OCI-LY7 (cell line): ENCODE measurements at regions of chr21 and their contacts with region 1.

Region 1: GRCh38 chr21:33266050-33266788 is at the start of gene IL10RB:
- DNase-seq: peak; percentile 85
- H3K4me3 ChIP-seq: peak within 1 kb of the TSS; percentile 78
- H3K27ac ChIP-seq: peak within 1 kb of the TSS; percentile 70
- H3K4me1 ChIP-seq: peaks cover 60% of the 10 kb centered on the region
- CTCF ChIP-seq: no peak
- total RNA-seq, gene IL10RB: 44.3 and 48.0 TPM in 2 replicates

Region 2: GRCh38 chr21:33089398-33090119 is 176.7 kb before region 1 on chr21:
- CTCF ChIA-PET with region 1: no interaction called
- POLR2A ChIA-PET with region 1: no interaction called
- intact Hi-C with region 1: no loop called
- DNase-seq: no peak
- H3K4me3 ChIP-seq: no peak overlapping the region
- H3K27ac ChIP-seq: no peak overlapping the region
- H3K4me1 ChIP-seq: no peaks in the 10 kb centered on the region
- CTCF ChIP-seq: no peak

Region 3: GRCh38 chr21:33205476-33205875 is 60.7 kb before region 1 on chr21:
- CTCF ChIA-PET with region 1: interaction called, 4 read pairs
- POLR2A ChIA-PET with region 1: interaction called, 6 read pairs
- intact Hi-C with region 1: loop called (anchors 2 kb)
- DNase-seq: peak; percentile 74
- H3K4me3 ChIP-seq: peak overlapping the region; percentile 56
- H3K27ac ChIP-seq: peak overlapping the region; percentile 88
- H3K4me1 ChIP-seq: peaks cover 68% of the 10 kb centered on the region
- CTCF ChIP-seq: peak; percentile 61

Region 4: DNA sequence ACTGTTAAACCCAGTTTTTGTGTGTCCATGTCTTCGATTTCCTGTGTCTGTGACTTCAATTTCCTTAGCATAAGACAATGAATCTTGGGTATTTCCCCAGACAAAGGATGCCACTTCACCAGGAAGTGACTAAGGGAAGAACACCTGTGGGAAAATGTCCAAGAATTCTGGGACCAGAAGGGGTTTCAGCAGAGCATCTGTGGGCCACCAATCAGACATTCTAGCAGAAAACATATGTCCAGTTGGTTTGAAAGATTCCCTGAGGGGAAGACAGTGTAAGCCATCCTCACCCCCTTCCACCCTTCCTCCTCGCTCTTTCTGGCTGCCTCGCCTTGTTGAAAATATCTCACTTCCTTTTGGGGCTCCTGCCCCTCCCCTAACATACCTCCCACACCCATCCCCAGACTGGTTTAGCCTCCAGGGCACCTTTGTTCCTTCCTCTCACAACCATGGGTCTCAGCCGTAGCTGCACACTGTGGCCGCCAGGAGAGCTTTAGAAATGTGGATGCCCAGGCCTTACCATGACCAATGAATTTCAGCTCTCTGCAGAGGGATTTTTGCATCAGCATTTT is 33.0 kb after region 1 on chr21:
- CTCF ChIA-PET with region 1: no interaction called
- POLR2A ChIA-PET with region 1: interaction called, 12 read pairs
- intact Hi-C with region 1: loop called (anchors 1 kb)
- DNase-seq: peak; percentile 89
- H3K4me3 ChIP-seq: peak overlapping the region; percentile 25
- H3K27ac ChIP-seq: peak overlapping the region; percentile 95
- H3K4me1 ChIP-seq: peaks cover 98% of the 10 kb centered on the region
- CTCF ChIP-seq: peak; percentile 67

Region 5: DNA sequence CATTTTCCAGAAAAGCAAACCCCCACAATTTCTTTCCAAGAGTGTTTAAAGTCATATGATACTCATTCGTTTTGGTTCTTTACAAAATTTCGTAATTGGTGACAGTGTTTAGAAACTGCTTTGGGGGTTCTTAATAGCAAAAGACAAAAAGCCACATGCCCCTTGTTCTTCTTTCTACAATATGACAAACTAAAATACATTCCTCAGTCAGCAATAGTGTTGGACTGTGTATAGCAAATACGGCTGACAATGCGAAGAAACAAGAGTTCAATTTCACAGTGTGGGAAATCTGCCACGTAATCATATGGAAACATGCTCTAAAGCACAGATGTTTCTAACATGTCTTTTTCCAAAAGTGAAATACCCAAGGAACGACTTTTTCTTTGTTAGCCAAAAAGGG is 50.9 kb after region 1 on chr21:
- CTCF ChIA-PET with region 1: interaction called, 11 read pairs
- POLR2A ChIA-PET with region 1: interaction called, 5 read pairs
- intact Hi-C with region 1: no loop called
- DNase-seq: no peak
- H3K4me3 ChIP-seq: no peak overlapping the region
- H3K27ac ChIP-seq: no peak overlapping the region
- H3K4me1 ChIP-seq: peaks cover 39% of the 10 kb centered on the region
- CTCF ChIP-seq: no peak

Region 6: DNA sequence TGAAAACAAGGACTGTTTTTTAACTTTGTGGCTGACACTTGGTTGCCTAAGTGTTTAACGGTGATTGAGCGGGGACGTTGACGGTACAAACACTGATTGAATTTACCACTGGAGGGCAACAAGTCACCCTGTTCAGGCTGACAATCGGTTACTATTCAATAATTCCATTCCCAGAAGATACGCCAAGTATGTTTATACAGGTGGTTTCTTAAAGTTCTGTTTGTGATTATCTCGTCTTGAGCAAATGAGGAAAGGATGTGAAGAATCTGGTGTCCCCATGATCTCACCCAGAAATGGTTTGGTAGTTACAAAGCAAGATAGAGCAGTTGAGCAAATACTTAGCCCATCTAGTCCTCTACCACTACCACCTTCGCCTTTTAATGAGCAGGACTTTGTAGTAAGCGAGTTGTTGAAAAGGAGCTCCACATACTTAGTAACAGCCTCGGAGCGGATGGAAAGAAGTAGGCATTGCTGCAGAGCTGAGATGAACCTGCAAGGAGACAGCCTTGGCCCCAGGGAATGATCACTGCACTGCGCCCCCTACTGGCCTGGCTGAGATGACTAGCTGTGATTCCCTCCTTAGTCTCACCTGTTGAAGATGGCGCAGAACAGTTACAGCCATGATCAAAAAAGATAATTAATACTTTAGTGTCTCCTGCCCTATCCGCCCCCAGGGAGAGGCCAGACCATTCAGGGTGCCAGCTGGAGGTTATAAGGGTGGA is 94.8 kb after region 1 on chr21:
- CTCF ChIA-PET with region 1: no interaction called
- POLR2A ChIA-PET with region 1: no interaction called
- intact Hi-C with region 1: loop called (anchors 5 kb)
- DNase-seq: peak; percentile 85
- H3K4me3 ChIP-seq: peak overlapping the region; percentile 38
- H3K27ac ChIP-seq: peak overlapping the region; percentile 73
- H3K4me1 ChIP-seq: peaks cover 38% of the 10 kb centered on the region
- CTCF ChIP-seq: peak; percentile 94

Region 7: DNA sequence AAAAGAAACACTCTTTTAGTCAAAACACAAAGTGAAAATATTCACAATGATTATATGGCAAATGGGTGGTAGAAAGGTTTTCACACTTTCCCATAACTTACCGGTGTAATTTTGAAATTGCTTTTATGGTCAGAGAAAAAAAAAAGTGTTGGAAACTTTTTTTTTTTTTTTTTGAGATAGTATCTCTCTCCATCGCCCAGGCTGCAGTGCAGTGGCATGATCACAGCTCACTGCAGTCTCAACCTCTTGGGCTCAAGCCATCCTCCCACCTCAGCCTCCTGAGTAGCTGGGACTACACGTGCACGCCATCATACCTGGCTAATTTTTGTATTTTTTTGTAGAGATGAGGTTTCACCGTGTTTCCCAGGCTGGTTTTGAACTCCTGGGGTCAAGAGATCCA is 140.3 kb after region 1 on chr21:
- CTCF ChIA-PET with region 1: no interaction called
- POLR2A ChIA-PET with region 1: no interaction called
- intact Hi-C with region 1: no loop called
- DNase-seq: no peak
- H3K4me3 ChIP-seq: no peak overlapping the region
- H3K27ac ChIP-seq: no peak overlapping the region
- H3K4me1 ChIP-seq: peaks cover 43% of the 10 kb centered on the region
- CTCF ChIP-seq: no peak